CD8-positive, alpha-beta T cell (primary cell): ENCODE measurements at regions of chr15 and their contacts with region 1.

Region 1: GRCh38 chr15:48861813-48862431 is 16.0 kb upstream of the EID1 start:
- DNase-seq: peak in 7 of 9 experiments; percentile 9 to 80 (median 41)
- ATAC-seq: peak; percentile 63
- H3K4me3 ChIP-seq: no peak overlapping the region
- H3K4me3 Mint-ChIP-seq: no peak overlapping the region
- H3K27ac ChIP-seq: no peak overlapping the region
- H3K27ac Mint-ChIP-seq: no peak overlapping the region
- H3K4me1 ChIP-seq: no peaks in the 10 kb centered on the region
- H3K4me1 Mint-ChIP-seq: no peaks in the 10 kb centered on the region
- H3K27me3 ChIP-seq: no peaks in the 10 kb centered on the region
- H3K27me3 Mint-ChIP-seq: peaks cover 2% of the 10 kb centered on the region
- CTCF ChIP-seq: peak; percentile 94

Region 2: GRCh38 chr15:48774484-48774883 is 87.4 kb before region 1 on chr15:
- CTCF ChIA-PET with region 1: no interaction called
- POLR2A ChIA-PET with region 1: no interaction called
- intact Hi-C with region 1: no loop called
- DNase-seq: no peak
- ATAC-seq: no peak
- H3K4me3 ChIP-seq: no peak overlapping the region
- H3K4me3 Mint-ChIP-seq: no peak overlapping the region
- H3K27ac ChIP-seq: no peak overlapping the region
- H3K27ac Mint-ChIP-seq: no peak overlapping the region
- H3K4me1 ChIP-seq: no peaks in the 10 kb centered on the region
- H3K4me1 Mint-ChIP-seq: no peaks in the 10 kb centered on the region
- H3K27me3 ChIP-seq: no peaks in the 10 kb centered on the region
- H3K27me3 Mint-ChIP-seq: no peaks in the 10 kb centered on the region
- CTCF ChIP-seq: no peak

Region 3: GRCh38 chr15:48975472-48976419 is 113.8 kb after region 1 on chr15:
- CTCF ChIA-PET with region 1: interaction called, 15 read pairs
- POLR2A ChIA-PET with region 1: no interaction called
- intact Hi-C with region 1: loop called (anchors 1 kb)
- DNase-seq: peak; percentile 42 to 82 (median 67)
- ATAC-seq: peak; percentile 98
- H3K4me3 ChIP-seq: peak overlapping the region; percentile 30 to 42
- H3K4me3 Mint-ChIP-seq: peak overlapping the region; percentile 63
- H3K27ac ChIP-seq: no peak overlapping the region
- H3K27ac Mint-ChIP-seq: no peak overlapping the region
- H3K4me1 ChIP-seq: peaks cover 8% of the 10 kb centered on the region
- H3K4me1 Mint-ChIP-seq: peaks cover 3% of the 10 kb centered on the region
- H3K27me3 ChIP-seq: peaks cover 0 to 8% of the 10 kb centered on the region in 2 experiments
- H3K27me3 Mint-ChIP-seq: peaks cover 19% of the 10 kb centered on the region
- CTCF ChIP-seq: peak; percentile 98

Region 4: GRCh38 chr15:49235446-49236124 is 373.7 kb after region 1 on chr15:
- CTCF ChIA-PET with region 1: no interaction called
- POLR2A ChIA-PET with region 1: no interaction called
- intact Hi-C with region 1: loop called in 1 of 2 experiments (anchors 1 kb)
- DNase-seq: peak; percentile 17 to 72 (median 35)
- ATAC-seq: peak; percentile 65
- H3K4me3 ChIP-seq: no peak overlapping the region
- H3K4me3 Mint-ChIP-seq: no peak overlapping the region
- H3K27ac ChIP-seq: peak overlapping the region in 1 of 2 experiments; percentile 4
- H3K27ac Mint-ChIP-seq: peak overlapping the region; percentile 33
- H3K4me1 ChIP-seq: no peaks in the 10 kb centered on the region
- H3K4me1 Mint-ChIP-seq: peaks cover 15% of the 10 kb centered on the region
- H3K27me3 ChIP-seq: no peaks in the 10 kb centered on the region
- H3K27me3 Mint-ChIP-seq: no peaks in the 10 kb centered on the region
- CTCF ChIP-seq: peak; percentile 64

Region 5: GRCh38 chr15:50003786-50004334 is 1141.9 kb after region 1 on chr15:
- CTCF ChIA-PET with region 1: interaction called, 6 read pairs
- POLR2A ChIA-PET with region 1: no interaction called
- intact Hi-C with region 1: loop called in 1 of 2 experiments (anchors 5 kb)
- DNase-seq: peak; percentile 16 to 82 (median 56)
- ATAC-seq: peak; percentile 64
- H3K4me3 ChIP-seq: no peak overlapping the region
- H3K4me3 Mint-ChIP-seq: no peak overlapping the region
- H3K27ac ChIP-seq: peak overlapping the region in 1 of 2 experiments; percentile 57
- H3K27ac Mint-ChIP-seq: no peak overlapping the region
- H3K4me1 ChIP-seq: no peaks in the 10 kb centered on the region
- H3K4me1 Mint-ChIP-seq: peaks cover 5% of the 10 kb centered on the region
- H3K27me3 ChIP-seq: no peaks in the 10 kb centered on the region
- H3K27me3 Mint-ChIP-seq: no peaks in the 10 kb centered on the region
- CTCF ChIP-seq: no peak

Region 6: GRCh38 chr15:50145451-50145872 is 1283.5 kb after region 1 on chr15:
- CTCF ChIA-PET with region 1: interaction called, 24 read pairs
- POLR2A ChIA-PET with region 1: no interaction called
- intact Hi-C with region 1: loop called in 1 of 2 experiments (anchors 1 kb)
- DNase-seq: peak in 2 of 9 experiments; percentile 59 to 69
- ATAC-seq: no peak
- H3K4me3 ChIP-seq: no peak overlapping the region
- H3K4me3 Mint-ChIP-seq: no peak overlapping the region
- H3K27ac ChIP-seq: no peak overlapping the region
- H3K27ac Mint-ChIP-seq: no peak overlapping the region
- H3K4me1 ChIP-seq: no peaks in the 10 kb centered on the region
- H3K4me1 Mint-ChIP-seq: no peaks in the 10 kb centered on the region
- H3K27me3 ChIP-seq: no peaks in the 10 kb centered on the region
- H3K27me3 Mint-ChIP-seq: no peaks in the 10 kb centered on the region
- CTCF ChIP-seq: peak; percentile 73